Left cardiac atrium (tissue), 4 donors: ENCODE measurements at regions of chr6 and their contacts with region 1.

Region 1: DNA sequence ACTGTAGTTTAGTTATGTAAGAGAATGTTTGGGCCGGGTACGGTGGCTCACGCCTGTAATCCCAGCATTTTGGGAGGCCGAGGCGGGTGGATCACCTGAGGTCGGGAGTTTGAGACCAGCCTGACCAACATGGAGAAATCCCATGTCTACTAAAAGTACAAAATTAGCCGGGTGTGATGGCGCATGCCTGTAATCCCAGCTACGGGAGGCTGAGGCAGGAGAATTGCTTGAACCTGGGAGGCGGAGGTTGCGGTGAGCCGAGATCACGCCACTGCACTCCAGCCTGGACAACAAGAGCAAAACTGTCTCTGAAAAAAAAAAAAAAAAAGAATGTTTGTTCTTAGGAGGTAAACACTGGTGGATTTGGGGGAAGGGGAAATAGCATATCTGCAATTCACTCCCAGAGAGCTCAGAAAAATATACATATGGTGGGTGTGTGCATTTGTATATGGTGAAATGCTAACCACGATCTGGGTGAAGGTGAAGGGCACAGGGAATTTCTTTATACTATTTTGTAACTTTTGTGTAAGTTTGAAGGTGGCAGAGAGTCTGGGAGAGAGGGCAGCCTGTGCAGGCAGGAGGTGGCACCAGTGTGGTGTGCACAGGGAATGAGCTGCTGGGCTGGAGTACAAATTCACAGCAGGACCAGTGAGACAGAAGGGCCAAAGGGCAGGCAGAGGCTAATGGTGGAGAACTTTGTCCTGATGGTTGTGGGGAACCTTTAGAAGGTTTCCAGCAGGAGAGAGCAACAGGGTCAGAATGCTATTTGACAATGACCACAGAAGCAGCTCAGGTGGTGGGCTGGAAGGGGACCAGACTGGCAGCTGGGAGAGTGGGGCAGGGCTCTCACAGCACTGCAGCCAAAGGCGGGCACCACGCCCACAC is 42.4 kb downstream of the SSR1 start:
- DNase-seq: no peak
- ATAC-seq: peak in 1 of 2 donors; percentile 75

Region 2: DNA sequence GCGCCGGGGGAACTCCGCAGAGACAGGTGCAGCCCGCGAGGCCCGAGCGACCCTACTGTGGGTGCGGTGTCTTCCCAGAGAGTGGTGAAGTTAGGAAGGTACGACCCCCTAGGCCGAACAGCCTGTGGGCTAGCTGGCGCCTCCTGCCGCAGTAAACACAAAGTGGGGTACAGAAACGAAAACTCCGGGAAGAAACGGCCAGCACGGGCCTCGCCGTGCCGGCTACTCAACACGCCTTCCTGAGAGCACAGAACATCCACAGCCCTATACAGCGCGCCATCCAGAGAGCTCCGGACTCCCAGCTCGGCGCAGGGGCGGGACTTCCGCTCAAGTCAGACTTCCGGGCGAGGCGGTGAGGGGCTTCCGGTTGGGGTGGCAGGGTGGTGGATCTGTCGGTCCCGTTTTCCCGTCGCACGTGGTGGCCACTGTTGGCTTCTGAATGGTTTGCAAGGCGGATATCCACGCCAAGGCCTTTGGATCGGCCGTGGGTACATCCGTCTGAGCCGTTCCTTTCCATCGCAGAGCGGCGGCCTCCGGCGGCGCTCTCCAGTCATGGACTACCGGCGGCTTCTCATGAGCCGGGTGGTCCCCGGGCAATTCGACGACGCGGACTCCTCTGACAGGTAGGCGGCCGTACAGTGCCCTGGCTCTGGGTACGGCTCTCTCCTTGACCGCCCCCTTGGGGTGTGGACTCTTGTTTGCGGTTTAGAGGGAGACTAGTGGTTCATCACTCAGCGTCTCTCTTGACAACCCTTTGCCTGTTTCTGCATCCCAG is 119.1 kb after region 1 on chr6 and contains the starts of genes CAGE1 and RIOK1:
- intact Hi-C with region 1: no loop called
- DNase-seq: peak; percentile 97
- ATAC-seq: peak; percentile 100
- total RNA-seq, gene CAGE1: 0.06 TPM in 1 of 2 donors, not detected in the other
- total RNA-seq, gene RIOK1: 10.0 to 16.4 TPM

Region 3: GRCh38 chr6:7615611-7616383 is 345.2 kb after region 1 on chr6:
- intact Hi-C with region 1: loop called in 1 of 2 experiments (anchors 10 kb)
- DNase-seq: no peak
- ATAC-seq: peak; percentile 59 to 64